ENCODE measurements at regions of chr3 and their contacts with region 1.

Region 1: DNA sequence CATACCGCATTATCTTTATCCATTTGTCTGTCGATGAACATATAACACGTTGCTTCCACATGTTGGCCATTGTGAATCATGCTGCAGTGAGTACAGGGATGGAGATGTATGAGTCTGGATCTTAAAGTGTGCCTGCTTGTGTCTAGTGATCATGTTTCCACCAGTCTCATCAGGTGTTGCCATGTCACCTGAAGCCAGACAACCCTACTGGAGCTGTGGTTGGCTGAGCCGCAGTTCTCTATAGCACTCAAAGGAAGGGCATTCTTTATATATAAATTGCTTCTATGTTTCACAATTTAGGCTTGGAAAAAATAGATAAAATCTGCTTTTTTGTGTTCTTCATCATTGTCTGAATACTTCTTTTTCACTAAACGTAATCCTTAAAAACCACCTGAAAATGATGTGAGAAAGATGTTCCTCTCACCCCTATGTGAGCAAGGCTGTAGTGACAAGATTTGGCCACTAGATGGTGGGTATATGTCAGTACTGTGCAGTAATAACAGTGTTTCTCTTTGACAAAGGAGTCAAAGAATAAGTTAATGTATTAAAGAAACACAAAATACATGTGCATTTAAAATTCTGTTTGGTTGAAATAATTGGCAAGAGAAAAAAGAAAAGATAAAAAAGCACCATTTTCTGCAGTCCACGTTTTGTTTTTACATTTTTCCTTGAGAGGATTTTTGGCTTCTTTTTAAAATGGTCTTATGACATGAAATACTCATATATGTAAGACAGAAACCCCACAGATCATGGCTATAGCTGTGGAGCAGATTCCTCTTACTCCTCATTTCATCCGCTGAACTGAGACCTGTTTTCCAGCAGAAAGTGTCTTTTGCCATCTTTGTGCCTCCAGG is 394.5 kb upstream of the DPPA4 start:
- DNase-seq: no peak
- H3K4me3 ChIP-seq: no peak overlapping the region
- H3K27ac ChIP-seq: no peak overlapping the region
- H3K4me1 ChIP-seq: no peaks in the 10 kb centered on the region
- H3K27me3 ChIP-seq: no peaks in the 10 kb centered on the region
- CTCF ChIP-seq: peak; percentile 73 to 89 (median 73)
- EP300 ChIP-seq: no peak
- POLR2A ChIP-seq: no peak

Region 2: DNA sequence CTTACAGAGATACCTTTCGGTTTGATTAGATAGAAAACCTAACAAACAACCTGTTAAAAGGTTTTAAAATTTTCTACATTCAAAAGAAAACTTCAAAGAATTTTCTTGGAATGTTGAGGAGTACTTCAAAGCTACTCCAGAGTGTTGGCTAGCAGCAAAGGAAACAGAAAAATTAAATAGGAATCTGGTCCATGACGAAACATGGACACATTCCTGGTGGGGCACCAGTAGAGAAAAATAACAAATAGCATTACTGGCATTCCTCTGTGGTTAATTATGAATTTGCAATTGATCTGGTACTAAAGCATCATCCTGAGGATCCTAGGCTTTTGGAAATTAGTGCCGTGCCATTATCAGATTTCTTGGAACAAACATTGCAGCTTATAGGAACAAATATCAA is 335.0 kb before region 1 on chr3:
- intact Hi-C with region 1: no loop called
- DNase-seq: no peak
- H3K4me3 ChIP-seq: no peak overlapping the region
- H3K27ac ChIP-seq: no peak overlapping the region
- H3K4me1 ChIP-seq: no peaks in the 10 kb centered on the region
- H3K27me3 ChIP-seq: no peaks in the 10 kb centered on the region
- CTCF ChIP-seq: no peak
- EP300 ChIP-seq: no peak
- POLR2A ChIP-seq: no peak

Region 3: GRCh38 chr3:110314512-110315114 is 582.8 kb after region 1 on chr3:
- intact Hi-C with region 1: loop called (anchors 5 kb)
- DNase-seq: no peak
- H3K4me3 ChIP-seq: no peak overlapping the region
- H3K27ac ChIP-seq: no peak overlapping the region
- H3K4me1 ChIP-seq: no peaks in the 10 kb centered on the region
- H3K27me3 ChIP-seq: no peaks in the 10 kb centered on the region
- CTCF ChIP-seq: peak; percentile 64 to 80 (median 74)
- EP300 ChIP-seq: no peak
- POLR2A ChIP-seq: no peak

Region 4: GRCh38 chr3:110932567-110932966 is 1200.7 kb after region 1 on chr3:
- intact Hi-C with region 1: no loop called
- DNase-seq: no peak
- H3K4me3 ChIP-seq: no peak overlapping the region
- H3K27ac ChIP-seq: no peak overlapping the region
- H3K4me1 ChIP-seq: no peaks in the 10 kb centered on the region
- H3K27me3 ChIP-seq: no peaks in the 10 kb centered on the region
- CTCF ChIP-seq: no peak
- EP300 ChIP-seq: no peak
- POLR2A ChIP-seq: no peak

Measured in esophagus muscularis mucosa (tissue), 4 donors.